HepG2 (cell line): ENCODE measurements at regions of chr2 and their contacts with region 1.

Region 1: GRCh38 chr2:158998551-158999248 is 30.3 kb downstream of the TANC1 start:
- DNase-seq: peak; percentile 86
- ATAC-seq: peak; percentile 47
- H3K4me3 ChIP-seq: no peak overlapping the region
- H3K27ac ChIP-seq: no peak overlapping the region
- H3K4me1 ChIP-seq: peaks cover 78% of the 10 kb centered on the region
- H3K27me3 ChIP-seq: no peaks in the 10 kb centered on the region
- CTCF ChIP-seq: no peak
- EP300 ChIP-seq: peak in 1 of 2 experiments; percentile 78; a peak in 2 of 4 replicates
- POLR2A ChIP-seq: no peak
- RAD21 ChIP-seq: no peak

Region 2: GRCh38 chr2:158968396-158969161 is 30.1 kb before region 1 on chr2 and contains the start of gene TANC1:
- CTCF ChIA-PET with region 1: no interaction called
- POLR2A ChIA-PET with region 1: interaction called, 7 read pairs
- in situ Hi-C with region 1: no loop called
- intact Hi-C with region 1: loop called (anchors 2 kb)
- DNase-seq: peak; percentile 77
- ATAC-seq: peak; percentile 93
- H3K4me3 ChIP-seq: peak within 1 kb of the TSS; percentile 71 to 84 (median 76)
- H3K27ac ChIP-seq: no peak within 1 kb of the TSS
- H3K4me1 ChIP-seq: peaks cover 34% of the 10 kb centered on the region
- H3K27me3 ChIP-seq: peaks cover 0 to 52% of the 10 kb centered on the region in 2 experiments; a peak in 4 of 5 replicates
- CTCF ChIP-seq: no peak; the same call in 1 of the 2 replicates
- EP300 ChIP-seq: no peak
- POLR2A ChIP-seq: peak; percentile 35 to 54; a peak in 3 of 4 replicates
- RAD21 ChIP-seq: no peak
- total RNA-seq, gene TANC1: 2.3 and 2.8 TPM in 2 replicates

Region 3: DNA sequence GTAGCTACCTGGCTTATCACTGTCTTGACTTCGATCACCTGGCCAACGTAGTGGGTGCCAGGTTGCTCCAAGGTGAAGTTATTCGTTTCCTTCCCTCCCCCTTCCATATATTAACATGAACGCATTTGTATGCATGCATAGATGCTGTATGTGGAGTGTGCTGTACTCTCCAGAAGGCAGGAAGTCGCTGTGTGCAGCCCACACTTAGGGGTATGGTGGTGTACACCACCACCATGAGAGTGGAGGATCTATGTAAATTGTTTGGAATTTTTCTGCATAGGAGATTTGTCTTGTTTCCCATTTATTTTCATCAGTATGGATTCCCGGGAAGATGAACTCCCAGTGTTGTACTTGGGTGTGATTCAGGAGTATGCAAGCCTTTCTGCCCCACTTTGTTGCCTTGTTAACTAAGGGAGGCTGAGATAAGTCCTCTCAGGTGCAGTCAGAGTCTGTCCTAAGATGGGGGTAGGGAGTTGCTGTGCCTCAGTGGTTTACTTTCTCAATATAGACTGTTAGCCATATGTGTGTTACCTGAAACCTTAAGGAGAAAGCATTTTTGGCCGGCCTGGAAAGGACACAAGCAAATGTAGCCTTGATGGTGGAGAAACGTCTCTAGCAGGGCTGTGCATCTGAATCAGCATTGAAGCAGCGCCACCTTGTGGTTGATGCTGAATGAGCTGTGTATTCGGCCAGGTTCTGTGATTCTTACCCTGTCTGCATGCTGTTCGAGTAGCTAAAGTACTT is 119.6 kb after region 1 on chr2:
- CTCF ChIA-PET with region 1: no interaction called
- POLR2A ChIA-PET with region 1: no interaction called
- in situ Hi-C with region 1: no loop called
- intact Hi-C with region 1: loop called (anchors 5 kb)
- DNase-seq: peak; percentile 68
- ATAC-seq: peak; percentile 97
- H3K4me3 ChIP-seq: no peak overlapping the region
- H3K27ac ChIP-seq: no peak overlapping the region
- H3K4me1 ChIP-seq: no peaks in the 10 kb centered on the region
- H3K27me3 ChIP-seq: no peaks in the 10 kb centered on the region
- CTCF ChIP-seq: peak; percentile 97
- EP300 ChIP-seq: no peak
- POLR2A ChIP-seq: no peak
- RAD21 ChIP-seq: peak; percentile 94

Region 4: DNA sequence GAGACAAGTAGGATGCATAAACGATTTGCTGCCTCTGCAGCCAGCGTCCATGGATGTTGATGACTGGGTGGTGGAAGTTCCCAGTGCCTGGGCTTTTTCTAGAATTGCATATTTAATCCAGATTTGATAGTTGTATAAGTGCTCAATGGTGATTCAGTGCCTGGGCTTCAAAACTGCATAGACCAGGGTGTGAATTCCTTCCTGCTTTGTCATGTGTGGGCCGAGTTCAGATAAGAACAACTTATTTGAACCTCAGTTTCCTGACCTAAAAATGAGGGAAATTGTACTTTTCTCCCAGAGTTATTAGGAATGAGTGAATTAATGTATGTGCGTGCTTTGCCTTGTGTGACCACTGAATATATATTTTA is 133.2 kb after region 1 on chr2:
- CTCF ChIA-PET with region 1: no interaction called
- POLR2A ChIA-PET with region 1: no interaction called
- in situ Hi-C with region 1: no loop called
- intact Hi-C with region 1: no loop called
- DNase-seq: no peak
- ATAC-seq: no peak
- H3K4me3 ChIP-seq: no peak overlapping the region
- H3K27ac ChIP-seq: no peak overlapping the region
- H3K4me1 ChIP-seq: no peaks in the 10 kb centered on the region
- H3K27me3 ChIP-seq: no peaks in the 10 kb centered on the region
- CTCF ChIP-seq: no peak
- EP300 ChIP-seq: no peak
- POLR2A ChIP-seq: no peak
- RAD21 ChIP-seq: no peak

Region 5: DNA sequence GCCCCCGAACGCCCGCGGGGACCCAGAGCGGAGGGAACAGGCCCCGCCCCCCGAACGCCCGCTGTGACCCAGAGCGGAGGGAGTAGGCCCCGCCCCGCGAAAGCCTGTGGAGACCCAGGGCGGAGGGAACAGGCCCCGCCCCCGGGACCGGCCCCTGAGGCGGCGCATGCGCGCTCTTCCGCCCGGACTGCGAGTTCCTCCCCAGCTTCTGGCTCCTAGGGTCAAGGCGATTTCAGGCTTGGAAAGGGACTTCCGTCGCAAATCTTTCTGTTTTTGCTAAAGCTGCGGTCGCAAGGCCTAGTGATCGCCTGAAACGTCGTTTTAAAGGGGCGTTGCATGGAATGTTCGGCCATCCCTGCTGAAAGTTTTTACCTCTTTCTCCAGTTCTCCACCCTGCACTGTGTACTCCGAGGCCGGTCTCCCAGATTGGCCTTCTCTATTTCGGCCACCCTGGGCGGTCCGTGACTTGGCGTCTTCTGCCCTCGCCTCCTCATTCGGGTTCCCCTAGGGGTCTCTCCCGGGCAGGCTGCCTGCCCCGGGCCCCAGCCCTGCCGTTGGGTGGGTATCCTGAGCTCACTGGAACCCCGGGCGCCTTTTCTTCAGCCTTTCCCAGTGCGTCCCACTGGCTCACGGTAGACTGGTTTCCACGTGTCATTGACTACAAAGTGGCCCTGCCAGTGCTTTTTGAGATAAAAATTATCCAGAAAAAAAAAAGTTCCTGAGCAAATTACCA is 288.2 kb after region 1 on chr2:
- CTCF ChIA-PET with region 1: no interaction called
- POLR2A ChIA-PET with region 1: no interaction called
- in situ Hi-C with region 1: no loop called
- intact Hi-C with region 1: no loop called
- DNase-seq: peak; percentile 97
- ATAC-seq: peak; percentile 91
- H3K4me3 ChIP-seq: peak overlapping the region; percentile 67 to 93 (median 73)
- H3K27ac ChIP-seq: peak overlapping the region; percentile 96
- H3K4me1 ChIP-seq: peaks cover 39% of the 10 kb centered on the region
- H3K27me3 ChIP-seq: no peaks in the 10 kb centered on the region; a peak in 1 of 5 replicates
- CTCF ChIP-seq: peak; percentile 34; the same call in 1 of the 2 replicates
- EP300 ChIP-seq: peak in 1 of 2 experiments; percentile 8; a peak in 1 of 4 replicates
- POLR2A ChIP-seq: peak; percentile 92 to 96
- RAD21 ChIP-seq: peak; percentile 49; the same call in 1 of the 2 replicates